Activated CD4-positive, alpha-beta memory T cell treated with anti-CD3 and anti-CD28 coated beads, Interleukin-2, amount 10 ng/mL, durations not matched to agents 7 days and 5 days (primary cell): ENCODE measurements at regions of chr14 and their contacts with region 1.

Region 1: DNA sequence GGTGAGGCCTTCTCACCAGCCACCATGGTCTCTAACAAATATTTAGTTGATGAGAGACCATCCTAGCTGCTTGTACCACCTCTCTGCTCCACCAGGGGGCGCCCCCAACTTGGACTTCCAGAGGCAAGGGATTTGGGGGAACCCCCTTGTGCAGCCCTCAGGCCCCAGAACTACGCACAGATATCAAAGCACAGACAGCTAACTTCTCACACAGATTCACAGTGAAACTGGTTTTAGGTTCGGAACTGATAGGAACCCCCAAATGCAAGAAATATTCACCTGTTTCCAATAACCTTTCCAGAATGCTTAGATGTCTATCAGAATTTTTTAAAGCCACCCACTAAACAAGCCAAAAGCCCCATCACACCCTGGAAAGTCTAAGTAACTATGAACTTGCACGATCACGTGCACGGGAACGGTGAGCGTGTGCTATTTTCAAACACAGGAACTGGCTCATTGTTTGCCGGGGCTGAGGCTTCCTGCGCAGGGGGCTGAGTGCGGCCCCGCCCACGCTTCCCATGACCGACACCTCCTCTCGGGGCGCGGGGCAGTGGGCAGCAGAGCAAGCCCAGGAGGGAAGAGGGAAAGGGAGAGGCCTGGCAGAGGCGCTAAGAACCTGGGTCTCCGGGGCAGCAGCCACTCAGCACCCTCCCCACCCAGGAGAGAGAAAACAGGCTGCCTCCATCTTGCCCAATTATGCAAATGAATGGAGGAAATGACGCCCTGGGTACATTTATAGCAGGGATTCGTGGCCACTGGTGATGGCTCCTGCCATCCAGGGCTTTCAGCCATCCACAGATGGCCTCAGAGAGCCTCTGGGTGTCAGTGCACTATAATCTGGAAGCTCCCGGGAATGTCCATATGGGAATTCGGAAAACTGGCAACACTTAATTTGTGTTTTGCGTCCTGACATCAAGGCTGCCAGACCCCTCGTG is 79.4 kb upstream of the GPR68 start:
- DNase-seq: peak; percentile 92
- H3K4me3 Mint-ChIP-seq: peak overlapping the region; percentile 76
- H3K27ac Mint-ChIP-seq: peak overlapping the region; percentile 99
- H3K4me1 Mint-ChIP-seq: peaks cover 64% of the 10 kb centered on the region
- H3K27me3 Mint-ChIP-seq: no peaks in the 10 kb centered on the region

Region 2: DNA sequence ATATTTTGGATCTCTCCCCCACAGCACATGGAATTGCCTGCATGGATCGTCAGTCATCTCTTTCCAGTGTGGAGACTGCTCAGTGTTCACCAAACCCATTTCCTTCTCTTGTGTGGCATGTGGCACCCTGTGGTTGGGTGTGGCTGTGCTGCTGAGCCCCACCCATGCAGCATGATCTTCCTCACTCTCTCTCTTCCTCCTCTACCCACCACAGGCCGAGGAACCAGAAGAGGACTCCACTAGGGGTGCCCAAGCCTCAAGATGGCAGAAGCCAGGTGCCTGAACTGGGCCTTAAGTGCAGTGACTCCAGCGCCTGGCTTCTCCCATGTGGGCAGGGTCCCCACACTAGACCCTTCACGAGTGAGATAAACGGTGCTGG is 12.7 kb before region 1 on chr14:
- CTCF ChIA-PET with region 1: interaction called, 12 read pairs
- POLR2A ChIA-PET with region 1: interaction called, 10 read pairs
- DNase-seq: peak; percentile 85
- H3K4me3 Mint-ChIP-seq: peak overlapping the region; percentile 69
- H3K27ac Mint-ChIP-seq: peak overlapping the region; percentile 96
- H3K4me1 Mint-ChIP-seq: peaks cover 72% of the 10 kb centered on the region
- H3K27me3 Mint-ChIP-seq: no peaks in the 10 kb centered on the region

Region 3: DNA sequence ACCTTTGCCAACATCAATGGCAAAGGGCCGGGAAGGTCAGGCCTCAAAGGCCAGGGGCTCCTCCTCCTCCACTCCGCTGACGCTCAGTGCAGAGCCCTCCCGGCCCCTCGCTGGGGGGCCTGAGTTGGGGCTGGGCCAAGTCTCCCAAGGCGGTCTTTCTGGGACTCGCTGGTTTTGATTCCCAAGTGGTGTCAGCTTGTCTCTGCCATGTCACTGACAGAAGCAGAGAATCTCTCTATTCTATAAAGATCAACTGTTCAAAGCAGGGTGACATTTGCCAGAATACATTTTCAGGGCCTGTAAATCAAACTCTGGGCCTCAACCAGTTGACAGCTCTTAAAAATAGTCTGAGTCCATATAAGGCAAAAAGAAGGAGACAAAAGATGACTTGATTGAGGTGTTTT is 17.8 kb after region 1 on chr14:
- CTCF ChIA-PET with region 1: interaction called, 11 read pairs
- POLR2A ChIA-PET with region 1: interaction called, 7 read pairs
- DNase-seq: no peak
- H3K4me3 Mint-ChIP-seq: no peak overlapping the region
- H3K27ac Mint-ChIP-seq: no peak overlapping the region
- H3K4me1 Mint-ChIP-seq: peaks cover 12% of the 10 kb centered on the region
- H3K27me3 Mint-ChIP-seq: no peaks in the 10 kb centered on the region

Region 4: GRCh38 chr14:91373591-91374254 is 49.8 kb after region 1 on chr14:
- CTCF ChIA-PET with region 1: interaction called, 9 read pairs
- POLR2A ChIA-PET with region 1: interaction called, 12 read pairs
- DNase-seq: peak; percentile 69
- H3K4me3 Mint-ChIP-seq: peak overlapping the region; percentile 71
- H3K27ac Mint-ChIP-seq: peak overlapping the region; percentile 94
- H3K4me1 Mint-ChIP-seq: peaks cover 99% of the 10 kb centered on the region
- H3K27me3 Mint-ChIP-seq: no peaks in the 10 kb centered on the region

Region 5: DNA sequence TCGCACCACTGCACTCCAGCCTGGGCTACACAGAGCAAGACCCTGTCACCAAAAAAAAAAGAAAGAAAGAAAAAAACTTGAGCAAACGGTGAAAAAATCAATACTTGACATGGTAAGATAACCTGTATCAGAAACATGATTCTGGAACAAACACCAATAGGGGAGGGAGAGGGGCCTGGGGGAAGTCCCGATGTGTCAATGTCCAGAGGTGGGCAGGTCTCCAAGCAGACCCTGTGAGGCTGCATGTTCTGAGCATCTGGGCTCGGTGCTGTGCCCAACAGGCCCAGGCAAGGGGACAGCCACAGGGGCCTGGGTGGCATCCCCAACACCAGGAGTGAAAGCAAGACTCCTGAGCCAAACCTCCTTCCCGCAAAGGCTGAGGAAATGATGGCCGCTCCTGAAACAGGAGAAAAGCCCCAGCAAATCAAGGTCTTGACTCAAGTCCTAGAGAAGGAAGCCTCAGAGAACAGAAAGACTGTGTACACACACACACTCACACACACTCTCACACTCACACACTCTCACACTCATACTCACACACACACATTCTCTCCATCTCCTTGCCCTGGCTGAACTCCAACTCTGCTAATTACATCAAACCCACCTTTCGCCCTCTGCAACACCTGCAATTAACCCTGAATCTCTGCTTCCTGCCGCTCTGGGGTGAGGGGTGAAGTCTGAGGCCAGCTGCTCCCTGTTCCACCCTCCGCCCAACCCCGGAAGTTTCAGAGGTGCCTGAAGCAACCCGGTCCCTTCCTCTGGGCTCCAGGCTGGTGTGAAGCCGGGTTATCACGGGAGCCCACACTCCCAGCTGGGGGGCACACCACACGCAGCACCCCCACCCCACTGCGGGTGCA is 73.2 kb after region 1 on chr14:
- CTCF ChIA-PET with region 1: interaction called, 27 read pairs
- POLR2A ChIA-PET with region 1: interaction called, 8 read pairs
- DNase-seq: peak; percentile 81
- H3K4me3 Mint-ChIP-seq: peak overlapping the region; percentile 68
- H3K27ac Mint-ChIP-seq: peak overlapping the region; percentile 85
- H3K4me1 Mint-ChIP-seq: peaks cover 95% of the 10 kb centered on the region
- H3K27me3 Mint-ChIP-seq: no peaks in the 10 kb centered on the region

Region 6: DNA sequence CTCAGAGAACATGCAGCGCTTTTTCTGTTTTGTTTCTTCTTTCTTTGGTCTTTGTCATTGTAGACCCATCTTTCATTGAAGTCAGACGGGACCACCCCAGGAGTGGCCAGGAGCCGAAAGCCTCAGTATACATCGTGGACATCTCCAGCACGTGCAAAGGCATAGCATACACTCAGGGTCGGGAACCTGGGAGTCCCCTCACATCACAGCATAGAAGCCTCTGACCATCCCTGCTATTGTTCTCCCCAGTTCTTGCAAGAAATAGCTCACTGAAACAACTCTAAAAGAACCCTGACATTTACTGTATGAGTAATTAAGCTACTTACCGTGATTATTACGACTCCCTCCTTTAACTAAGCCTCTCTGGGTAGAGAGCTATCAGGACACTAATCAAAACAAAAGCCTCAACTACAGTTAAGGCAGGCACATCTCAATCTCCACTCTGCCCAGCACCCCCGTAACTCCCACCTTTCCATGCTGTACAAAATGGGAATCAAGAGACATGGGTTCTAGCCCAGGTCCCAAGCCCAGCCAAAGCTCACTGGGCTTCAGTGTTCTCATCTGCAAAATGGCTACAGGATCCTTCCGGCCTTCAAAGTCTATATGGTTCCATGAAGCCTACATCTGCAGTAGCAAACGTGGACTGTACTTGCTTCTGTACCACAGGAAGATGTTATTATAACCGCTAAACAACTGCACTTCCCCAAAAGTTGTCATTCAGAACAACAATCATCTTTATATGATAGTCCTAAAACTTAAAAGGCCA is 87.0 kb after region 1 on chr14:
- CTCF ChIA-PET with region 1: interaction called, 105 read pairs
- POLR2A ChIA-PET with region 1: interaction called, 65 read pairs
- DNase-seq: peak; percentile 41
- H3K4me3 Mint-ChIP-seq: peak overlapping the region; percentile 69
- H3K27ac Mint-ChIP-seq: peak overlapping the region; percentile 92
- H3K4me1 Mint-ChIP-seq: peaks cover 89% of the 10 kb centered on the region
- H3K27me3 Mint-ChIP-seq: no peaks in the 10 kb centered on the region

Region 7: GRCh38 chr14:91424813-91425530 is 101.0 kb after region 1 on chr14:
- CTCF ChIA-PET with region 1: interaction called, 105 read pairs
- POLR2A ChIA-PET with region 1: interaction called, 4 read pairs
- DNase-seq: no peak
- H3K4me3 Mint-ChIP-seq: no peak overlapping the region
- H3K27ac Mint-ChIP-seq: no peak overlapping the region
- H3K4me1 Mint-ChIP-seq: peaks cover 11% of the 10 kb centered on the region
- H3K27me3 Mint-ChIP-seq: peaks cover 7% of the 10 kb centered on the region